Mammary epithelial cell (primary cell): ENCODE measurements at regions of chr19 and their contacts with region 1.

Region 1: GRCh38 chr19:10251792-10252694 is at the start of gene MRPL4:
- DNase-seq: peak; percentile 99
- H3K4me3 ChIP-seq: peak within 1 kb of the TSS; percentile 76 to 97 (median 91)
- H3K27ac ChIP-seq: peak within 1 kb of the TSS; percentile 63
- H3K4me1 ChIP-seq: peaks cover 13% of the 10 kb centered on the region
- H3K27me3 ChIP-seq: no peaks in the 10 kb centered on the region
- CTCF ChIP-seq: no peak
- total RNA-seq, gene MRPL4: 55.8 to 89.1 TPM

Region 2: DNA sequence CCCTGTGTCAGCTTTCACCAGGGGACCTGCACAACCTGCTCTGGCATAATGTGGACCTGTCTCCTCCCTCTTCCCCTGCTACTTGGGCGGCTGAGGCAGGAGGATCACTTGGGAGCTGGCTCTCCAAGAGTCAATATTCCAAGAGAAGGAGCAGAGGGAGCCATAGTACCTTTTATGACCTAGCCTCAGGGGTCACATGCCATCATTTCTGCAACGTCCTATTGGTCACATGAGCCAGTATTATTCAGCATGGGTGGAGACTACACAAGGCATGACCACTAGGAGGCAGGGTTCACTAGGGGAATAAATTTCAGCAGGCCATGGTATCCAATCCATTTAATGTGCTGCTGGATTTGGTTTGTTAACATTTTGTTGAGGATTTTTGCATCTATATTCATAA is 177.9 kb before region 1 on chr19:
- CTCF ChIA-PET with region 1: no interaction called
- dilution Hi-C with region 1: no loop called
- in situ Hi-C with region 1: no loop called
- intact Hi-C with region 1: loop called (anchors 1 kb)
- DNase-seq: peak; percentile 27
- H3K4me3 ChIP-seq: no peak overlapping the region
- H3K27ac ChIP-seq: no peak overlapping the region
- H3K4me1 ChIP-seq: no peaks in the 10 kb centered on the region
- H3K27me3 ChIP-seq: peaks cover 2% of the 10 kb centered on the region
- CTCF ChIP-seq: peak; percentile 28 to 48

Region 3: GRCh38 chr19:10112895-10113591 is 139.0 kb before region 1 on chr19:
- CTCF ChIA-PET with region 1: no interaction called
- dilution Hi-C with region 1: no loop called
- in situ Hi-C with region 1: no loop called
- intact Hi-C with region 1: loop called (anchors 2 kb)
- DNase-seq: no peak
- H3K4me3 ChIP-seq: no peak overlapping the region
- H3K27ac ChIP-seq: no peak overlapping the region
- H3K4me1 ChIP-seq: peaks cover 5% of the 10 kb centered on the region
- H3K27me3 ChIP-seq: no peaks in the 10 kb centered on the region
- CTCF ChIP-seq: peak; percentile 44 to 77

Region 4: GRCh38 chr19:10135551-10136334 is 116.3 kb before region 1 on chr19:
- CTCF ChIA-PET with region 1: no interaction called
- dilution Hi-C with region 1: no loop called
- in situ Hi-C with region 1: no loop called
- intact Hi-C with region 1: loop called (anchors 1 kb)
- DNase-seq: peak; percentile 67
- H3K4me3 ChIP-seq: peak overlapping the region in 1 of 3 experiments; percentile 29
- H3K27ac ChIP-seq: no peak overlapping the region
- H3K4me1 ChIP-seq: peaks cover 10% of the 10 kb centered on the region
- H3K27me3 ChIP-seq: no peaks in the 10 kb centered on the region
- CTCF ChIP-seq: peak in 1 of 2 donors; percentile 36

Region 5: DNA sequence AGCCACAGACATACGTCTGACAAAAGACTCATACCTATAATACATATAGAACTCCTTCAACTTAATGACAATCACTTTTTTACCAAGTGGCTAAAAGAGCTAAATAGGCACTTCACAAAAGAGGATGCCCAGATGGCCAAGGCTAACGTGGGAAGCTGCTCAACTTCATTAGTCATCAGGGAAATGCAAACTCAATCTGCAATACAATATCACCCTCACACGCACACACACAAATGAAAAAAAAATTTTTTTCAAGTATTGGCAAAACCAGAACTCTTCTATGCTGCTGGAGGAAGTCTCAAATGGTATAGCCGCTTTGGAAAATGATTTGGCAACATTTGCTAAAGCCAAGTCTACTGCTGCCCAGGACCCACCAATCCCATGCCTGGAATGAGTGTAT is 42.7 kb before region 1 on chr19:
- CTCF ChIA-PET with region 1: no interaction called
- dilution Hi-C with region 1: no loop called
- in situ Hi-C with region 1: no loop called
- intact Hi-C with region 1: no loop called
- DNase-seq: no peak
- H3K4me3 ChIP-seq: no peak overlapping the region
- H3K27ac ChIP-seq: no peak overlapping the region
- H3K4me1 ChIP-seq: no peaks in the 10 kb centered on the region
- H3K27me3 ChIP-seq: no peaks in the 10 kb centered on the region
- CTCF ChIP-seq: no peak

Region 6: DNA sequence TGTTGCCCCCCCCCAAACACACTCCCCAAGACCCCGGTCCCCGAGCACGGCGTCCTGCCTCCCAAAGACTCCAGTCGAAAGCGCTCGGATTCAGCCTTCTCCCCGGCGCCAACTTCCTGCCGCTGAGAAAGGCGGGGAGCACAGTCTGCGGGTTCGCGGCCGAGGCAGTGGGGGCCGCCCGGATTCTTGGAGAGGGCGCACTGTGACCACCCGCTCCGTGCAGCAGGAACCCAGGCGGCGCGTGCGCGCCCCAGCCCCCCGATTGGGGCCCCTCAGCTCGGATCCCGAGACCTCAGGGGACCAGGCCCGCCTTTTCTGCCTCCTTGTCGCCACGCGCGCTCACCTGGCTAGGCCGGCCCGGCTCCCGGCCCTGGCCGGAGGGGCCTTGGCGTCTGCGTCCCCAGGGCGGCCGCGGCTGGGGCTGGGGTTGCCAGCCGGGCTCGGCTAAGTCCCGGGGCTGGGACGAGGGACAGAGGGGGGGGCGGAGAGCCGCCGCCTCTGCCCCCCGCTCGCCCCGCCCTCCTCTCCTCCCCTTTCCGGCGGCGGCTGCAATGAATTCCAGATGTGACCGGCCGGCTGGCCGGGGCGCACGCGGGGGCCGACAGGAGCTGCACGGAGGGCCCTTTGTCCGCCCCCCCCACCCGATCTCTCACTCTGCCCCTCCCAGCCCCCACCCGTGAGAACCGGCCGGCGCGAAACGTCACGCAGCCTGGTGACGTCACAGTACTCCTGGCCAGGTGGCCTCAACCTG is 21.0 kb before region 1 on chr19 and contains the start of gene S1PR2:
- CTCF ChIA-PET with region 1: no interaction called
- dilution Hi-C with region 1: no loop called
- in situ Hi-C with region 1: no loop called
- intact Hi-C with region 1: loop called (anchors 1 kb)
- DNase-seq: peak; percentile 57
- H3K4me3 ChIP-seq: peak within 1 kb of the TSS; percentile 71 to 99 (median 84)
- H3K27ac ChIP-seq: peak within 1 kb of the TSS; percentile 70
- H3K4me1 ChIP-seq: peaks cover 17% of the 10 kb centered on the region
- H3K27me3 ChIP-seq: no peaks in the 10 kb centered on the region
- CTCF ChIP-seq: no peak
- total RNA-seq, gene S1PR2: 5.6 to 15.3 TPM

Region 7: DNA sequence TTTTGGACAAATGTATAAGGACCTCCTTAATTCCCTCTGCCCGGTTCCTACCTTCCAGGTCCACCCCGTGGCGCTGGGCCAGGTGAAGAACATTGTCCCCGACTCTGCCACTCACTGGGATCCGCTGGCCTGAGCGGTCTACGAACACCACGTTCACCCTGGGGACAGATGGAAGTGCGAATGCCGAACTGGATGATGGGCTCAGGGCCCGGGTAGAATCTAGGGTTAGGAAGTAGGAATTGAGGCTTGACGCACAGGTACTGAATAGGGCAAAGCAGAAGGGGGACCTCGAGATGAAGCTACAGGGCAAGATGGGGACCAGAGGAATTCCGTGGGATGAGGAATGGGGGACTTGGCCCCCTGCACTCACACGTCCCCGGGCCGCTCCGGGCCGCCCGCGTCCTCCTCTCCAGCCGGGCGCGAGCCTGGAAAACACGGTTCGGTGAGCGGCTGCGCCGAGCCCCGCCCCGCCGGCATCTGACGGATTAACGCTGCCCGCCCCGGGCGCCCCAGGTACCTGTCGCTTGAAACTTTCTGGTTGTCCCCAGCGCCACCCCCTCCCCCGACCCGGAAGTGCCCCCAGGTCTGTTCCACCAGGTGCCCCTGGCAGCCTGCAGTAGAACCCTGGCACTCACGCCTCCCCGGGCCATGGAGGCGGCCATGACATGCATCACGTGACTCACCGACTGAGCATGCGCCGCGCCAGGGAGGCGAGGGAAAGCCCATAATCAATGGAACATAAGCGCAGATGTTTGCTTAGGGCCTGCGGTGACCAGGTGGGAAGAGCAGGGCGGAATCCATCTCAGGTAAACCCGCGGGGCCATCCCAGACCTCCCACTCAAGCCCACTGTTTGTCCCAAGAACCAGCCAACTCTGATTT is 63.5 kb after region 1 on chr19 and contains the start of gene FDX2:
- CTCF ChIA-PET with region 1: no interaction called
- dilution Hi-C with region 1: no loop called
- in situ Hi-C with region 1: no loop called
- intact Hi-C with region 1: no loop called
- DNase-seq: peak; percentile 80
- H3K4me3 ChIP-seq: peak within 1 kb of the TSS; percentile 43 to 73 (median 65)
- H3K27ac ChIP-seq: peak within 1 kb of the TSS; percentile 28
- H3K4me1 ChIP-seq: peaks cover 8% of the 10 kb centered on the region
- H3K27me3 ChIP-seq: no peaks in the 10 kb centered on the region
- CTCF ChIP-seq: no peak
- total RNA-seq, gene FDX2: 23.5 to 28.7 TPM

Region 8: DNA sequence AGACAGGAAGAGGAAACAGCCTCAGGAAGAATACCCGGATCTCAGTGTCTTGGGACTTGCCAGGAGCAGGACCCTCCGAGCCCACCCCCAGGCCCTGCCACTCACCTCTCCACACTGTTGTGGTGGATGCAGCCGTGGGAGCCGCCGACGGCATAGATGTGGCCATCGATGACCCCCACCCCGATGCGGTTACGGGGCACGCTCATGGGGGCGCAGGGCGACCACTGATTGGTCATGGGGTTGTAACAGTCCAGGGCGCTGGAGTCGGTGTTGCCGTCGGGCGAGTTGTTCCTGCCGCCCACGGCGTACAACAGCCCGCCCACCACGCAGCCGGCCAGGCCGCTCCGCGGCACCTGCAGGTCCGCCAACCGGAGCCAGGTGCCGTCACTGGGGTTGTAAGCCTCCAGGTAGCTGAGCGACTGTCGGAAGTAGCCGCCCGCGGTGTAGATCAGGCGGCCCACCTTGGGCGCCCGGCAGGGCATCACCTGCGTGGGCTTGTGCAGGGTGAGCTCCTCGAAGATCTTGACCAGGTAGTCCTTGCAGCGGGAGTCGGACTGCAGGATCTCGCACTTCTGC is 239.5 kb after region 1 on chr19:
- CTCF ChIA-PET with region 1: no interaction called
- dilution Hi-C with region 1: no loop called
- in situ Hi-C with region 1: no loop called
- intact Hi-C with region 1: no loop called
- DNase-seq: no peak
- H3K4me3 ChIP-seq: no peak overlapping the region
- H3K27ac ChIP-seq: no peak overlapping the region
- H3K4me1 ChIP-seq: no peaks in the 10 kb centered on the region
- H3K27me3 ChIP-seq: no peaks in the 10 kb centered on the region
- CTCF ChIP-seq: no peak